PC-9 (cell line): ENCODE measurements at regions of chr2 and their contacts with region 1.

Region 1: GRCh38 chr2:132830321-132830827 is 160.4 kb upstream of the LYPD1 start:
- DNase-seq: no peak
- H3K4me3 ChIP-seq: no peak overlapping the region
- H3K27ac ChIP-seq: no peak overlapping the region
- H3K4me1 ChIP-seq: no peaks in the 10 kb centered on the region
- H3K27me3 ChIP-seq: 0 out of 2 replicates have a peak, but pooled peaks cover 3% of the 10 kb centered on the region
- CTCF ChIP-seq: no peak

Region 2: GRCh38 chr2:132891498-132891897 is 61.1 kb after region 1 on chr2:
- CTCF ChIA-PET with region 1: no interaction called
- POLR2A ChIA-PET with region 1: no interaction called
- intact Hi-C with region 1: no loop called
- DNase-seq: no peak
- H3K4me3 ChIP-seq: no peak overlapping the region
- H3K27ac ChIP-seq: no peak overlapping the region
- H3K4me1 ChIP-seq: no peaks in the 10 kb centered on the region
- H3K27me3 ChIP-seq: no peaks in the 10 kb centered on the region; the same call in 1 of the 2 replicates
- CTCF ChIP-seq: no peak

Region 3: DNA sequence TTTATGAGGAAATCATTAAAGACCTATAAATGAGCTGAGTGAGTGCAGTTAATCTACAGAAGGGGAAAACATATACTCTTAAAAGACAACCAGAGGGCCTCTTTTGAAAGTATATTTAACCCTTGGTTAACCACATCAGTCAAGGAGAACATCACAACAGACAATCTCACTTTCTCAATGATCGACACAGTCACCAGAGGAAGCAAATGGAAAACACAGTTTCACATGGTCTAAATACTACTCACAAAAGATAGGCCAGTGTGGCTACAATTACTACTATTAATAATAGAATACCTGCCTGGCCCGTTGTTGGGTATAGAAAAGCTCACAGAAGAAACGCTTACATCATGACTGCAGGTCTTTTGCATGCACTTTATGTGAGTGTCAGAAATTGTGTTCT is 311.7 kb after region 1 on chr2:
- CTCF ChIA-PET with region 1: no interaction called
- POLR2A ChIA-PET with region 1: interaction called, 23 read pairs
- intact Hi-C with region 1: no loop called
- DNase-seq: no peak
- H3K4me3 ChIP-seq: no peak overlapping the region
- H3K27ac ChIP-seq: no peak overlapping the region
- H3K4me1 ChIP-seq: no peaks in the 10 kb centered on the region
- H3K27me3 ChIP-seq: no peaks in the 10 kb centered on the region
- CTCF ChIP-seq: no peak